Motor neuron (in vitro differentiated cells): ENCODE measurements at regions of chr16 and their contacts with region 1.

Region 1: DNA sequence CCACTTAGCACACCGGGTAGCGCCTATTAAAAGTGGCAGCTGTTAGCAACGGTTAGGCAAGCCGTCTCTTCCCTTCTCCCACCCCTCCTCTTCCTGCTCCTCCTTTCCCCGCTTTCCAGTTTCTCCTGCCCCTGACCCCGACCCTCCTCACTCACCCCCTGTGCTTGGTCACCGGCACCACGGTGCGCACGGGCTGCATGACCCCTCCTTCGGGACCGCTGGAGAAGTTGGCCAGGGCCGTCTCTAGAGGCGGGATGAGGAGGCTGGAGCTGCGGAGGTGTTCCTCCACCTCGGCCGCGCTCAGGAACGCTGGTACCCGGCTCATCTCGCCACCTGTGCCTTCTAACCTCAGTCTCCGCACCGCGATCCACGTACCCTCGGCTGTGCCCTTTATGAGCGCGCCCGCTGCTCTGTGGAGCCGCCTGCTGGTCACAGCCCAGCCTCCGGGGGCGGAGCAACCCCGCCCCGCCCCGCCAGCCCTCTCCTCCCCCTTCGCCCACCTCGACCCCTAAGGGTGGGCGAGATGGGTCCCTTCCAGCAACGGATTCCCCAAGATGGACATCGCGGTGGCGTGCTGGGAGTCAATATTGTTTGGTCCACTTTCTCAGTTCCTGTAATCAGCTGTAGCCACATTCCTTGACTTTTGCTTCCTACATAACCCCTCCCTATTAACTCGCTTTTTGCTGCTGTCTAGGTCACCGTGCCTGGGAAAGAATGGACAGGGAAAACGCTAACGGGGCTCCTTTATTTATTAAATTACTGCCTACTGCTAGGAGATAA is at the start of gene CRYM:
- ATAC-seq: peak; percentile 88 to 99 (median 99)
- H3K4me3 ChIP-seq: peak within 1 kb of the TSS; percentile 30 to 56 (median 41)
- H3K27ac ChIP-seq: no peak within 1 kb of the TSS
- H3K4me1 ChIP-seq: no peaks in the 10 kb centered on the region
- total RNA-seq, gene CRYM: 0.55 to 66.7 (median 1.7) TPM in 7 of 8 experiments, not detected in the other

Region 2: GRCh38 chr16:20806168-20807050 is 471.7 kb before region 1 on chr16 and contains the starts of genes ERI2 and REXO5:
- in situ Hi-C with region 1: loop called in 1 of 9 experiments (anchors 25 kb)
- ATAC-seq: peak; percentile 88 to 96 (median 95)
- H3K4me3 ChIP-seq: peak within 1 kb of the TSS; percentile 61 to 92 (median 71)
- H3K27ac ChIP-seq: peak within 1 kb of the TSS; percentile 41 to 74
- H3K4me1 ChIP-seq: peaks cover 0 to 6% of the 10 kb centered on the region in 2 donors
- total RNA-seq, gene ERI2: 16.5 to 36.5 (median 24.6) TPM
- total RNA-seq, gene REXO5: 2.1 to 16.9 (median 6.4) TPM

Region 3: GRCh38 chr16:21116148-21116693 is 161.9 kb before region 1 on chr16:
- in situ Hi-C with region 1: no loop called
- ATAC-seq: peak in 1 of 8 experiments; percentile 49
- H3K4me3 ChIP-seq: no peak overlapping the region
- H3K27ac ChIP-seq: no peak overlapping the region
- H3K4me1 ChIP-seq: no peaks in the 10 kb centered on the region